ENCODE measurements at regions of chrX and their contacts with region 1.

Region 1: DNA sequence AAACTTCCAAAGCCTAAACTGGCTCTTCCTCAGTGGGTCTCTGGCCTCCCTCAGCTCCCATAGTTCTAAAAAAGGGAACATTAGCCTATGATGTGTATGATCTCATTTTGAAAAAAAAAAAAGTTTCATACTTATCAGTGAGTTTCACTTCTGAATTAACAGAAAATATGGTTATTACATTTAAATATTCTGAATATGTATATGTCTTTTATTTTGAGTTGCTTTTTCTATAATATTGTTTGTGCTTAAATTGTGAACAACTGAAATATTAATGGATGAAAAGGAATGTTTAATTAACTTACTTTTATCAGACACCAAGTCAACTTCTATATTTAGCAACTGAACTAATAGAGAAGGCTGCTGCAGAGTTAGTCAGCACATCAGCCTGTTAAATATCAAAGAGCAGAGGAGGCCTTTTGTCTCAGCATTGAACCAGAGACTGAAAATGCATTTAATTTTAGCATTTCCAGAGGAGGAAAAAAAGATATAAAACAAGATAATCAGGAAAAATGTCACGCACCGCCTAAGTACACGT is 20.4 kb upstream of the FHL1 start:
- DNase-seq: no peak
- H3K4me3 ChIP-seq: no peak overlapping the region
- H3K27ac ChIP-seq: peak overlapping the region; percentile 66 to 86 (median 80)
- H3K4me1 ChIP-seq: peaks cover 0 to 19% (median 8%) of the 10 kb centered on the region in 4 donors
- H3K27me3 ChIP-seq: no peaks in the 10 kb centered on the region
- CTCF ChIP-seq: no peak
- EP300 ChIP-seq: no peak
- POLR2A ChIP-seq: no peak

Region 2: DNA sequence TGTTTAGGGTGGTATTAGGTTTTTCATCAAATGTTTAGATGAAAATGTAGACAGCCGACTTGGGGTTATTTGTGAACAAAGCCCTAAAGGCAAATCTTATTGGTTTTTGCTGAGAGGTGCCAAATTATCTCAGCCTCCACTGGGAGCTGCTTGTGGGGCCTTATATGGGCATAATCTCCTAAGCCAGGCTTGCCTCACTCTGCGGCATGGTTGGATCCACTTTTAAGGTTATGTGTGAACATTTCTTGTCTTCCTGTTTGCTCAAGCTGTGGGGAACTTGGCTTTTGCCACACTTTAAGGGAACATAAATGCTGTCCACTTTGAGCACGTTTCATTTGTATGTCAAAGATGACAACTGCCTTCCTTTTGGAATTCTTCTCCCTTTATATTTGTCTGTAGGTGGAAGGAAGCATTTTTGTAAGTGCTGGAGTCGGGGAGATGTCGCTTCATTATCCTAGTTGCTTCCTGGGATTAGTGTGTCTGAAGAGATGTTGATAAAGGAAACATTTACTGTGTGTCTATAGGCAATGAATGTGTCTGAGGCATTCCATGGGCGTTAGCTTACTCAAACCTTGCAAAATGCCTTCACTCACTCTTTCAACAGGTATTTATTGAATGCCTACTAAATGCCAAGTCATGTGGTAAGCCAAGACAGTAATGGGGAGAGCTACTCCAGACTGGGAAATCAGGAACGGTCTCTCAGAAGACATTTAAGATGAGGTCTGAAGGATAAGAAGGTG is 63.4 kb before region 1 on chrX:
- intact Hi-C with region 1: loop called (anchors 5 kb)
- DNase-seq: peak; percentile 72
- H3K4me3 ChIP-seq: no peak overlapping the region
- H3K27ac ChIP-seq: peak overlapping the region; percentile 77 to 84 (median 81)
- H3K4me1 ChIP-seq: peaks cover 0 to 40% (median 24%) of the 10 kb centered on the region in 4 donors
- H3K27me3 ChIP-seq: no peaks in the 10 kb centered on the region
- CTCF ChIP-seq: no peak
- EP300 ChIP-seq: no peak
- POLR2A ChIP-seq: no peak

Measured in sigmoid colon (tissue), 7 donors.